WTC11 (cell line): ENCODE measurements at regions of chr4 and their contacts with region 1.

Region 1: GRCh38 chr4:86653237-86653865 is 59.2 kb downstream of the PTPN13 start:
- DNase-seq: peak; percentile 40
- ATAC-seq: no peak
- H3K4me3 Mint-ChIP-seq: no peak overlapping the region
- H3K27ac Mint-ChIP-seq: no peak overlapping the region
- H3K4me1 Mint-ChIP-seq: no peaks in the 10 kb centered on the region
- H3K27me3 Mint-ChIP-seq: peaks cover 6% of the 10 kb centered on the region
- CTCF ChIP-seq: peak; percentile 78

Region 2: DNA sequence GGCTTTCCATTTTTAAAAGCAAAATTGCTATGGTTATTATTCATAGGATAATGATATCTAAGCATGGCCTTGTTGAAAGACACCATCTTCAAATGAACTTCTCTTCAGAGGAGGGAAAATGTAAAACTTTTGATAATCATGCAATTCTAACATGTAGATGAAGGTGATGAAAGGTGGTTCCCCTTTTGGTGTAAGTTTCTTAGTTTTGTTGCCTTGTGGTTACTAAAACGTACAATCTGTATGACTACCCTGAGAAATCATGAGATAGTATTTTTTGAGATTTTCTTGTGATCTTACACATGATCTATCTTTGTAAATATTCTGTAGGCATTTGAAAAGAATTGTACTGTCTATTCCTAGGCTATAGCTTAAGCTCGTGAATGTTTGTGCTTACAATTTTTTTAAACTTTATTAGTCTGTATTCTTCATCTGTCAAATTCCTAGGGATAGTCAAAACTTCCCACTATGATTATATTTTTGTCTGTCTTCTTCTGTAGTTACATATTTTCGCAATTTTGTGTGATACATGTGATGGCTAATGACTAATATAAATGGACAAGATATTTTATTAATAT is 11.7 kb before region 1 on chr4:
- CTCF ChIA-PET with region 1: interaction called, 17 read pairs
- POLR2A ChIA-PET with region 1: no interaction called
- DNase-seq: no peak
- ATAC-seq: no peak
- H3K4me3 Mint-ChIP-seq: no peak overlapping the region
- H3K27ac Mint-ChIP-seq: no peak overlapping the region; the same call in 1 of the 2 replicates
- H3K4me1 Mint-ChIP-seq: peaks cover 4% of the 10 kb centered on the region; the same call in 1 of the 2 replicates
- H3K27me3 Mint-ChIP-seq: no peaks in the 10 kb centered on the region
- CTCF ChIP-seq: no peak

Region 3: GRCh38 chr4:86664959-86665358 is 11.6 kb after region 1 on chr4:
- CTCF ChIA-PET with region 1: no interaction called
- POLR2A ChIA-PET with region 1: no interaction called
- DNase-seq: no peak
- ATAC-seq: no peak
- H3K4me3 Mint-ChIP-seq: no peak overlapping the region
- H3K27ac Mint-ChIP-seq: no peak overlapping the region
- H3K4me1 Mint-ChIP-seq: peaks cover 13% of the 10 kb centered on the region
- H3K27me3 Mint-ChIP-seq: no peaks in the 10 kb centered on the region
- CTCF ChIP-seq: no peak

Region 4: GRCh38 chr4:86720508-86721068 is 67.2 kb after region 1 on chr4:
- CTCF ChIA-PET with region 1: no interaction called
- POLR2A ChIA-PET with region 1: no interaction called
- DNase-seq: no peak
- ATAC-seq: no peak
- H3K4me3 Mint-ChIP-seq: no peak overlapping the region
- H3K27ac Mint-ChIP-seq: no peak overlapping the region
- H3K4me1 Mint-ChIP-seq: no peaks in the 10 kb centered on the region
- H3K27me3 Mint-ChIP-seq: no peaks in the 10 kb centered on the region
- CTCF ChIP-seq: no peak